ENCODE measurements at regions of chr19 and their contacts with region 1.

Region 1: DNA sequence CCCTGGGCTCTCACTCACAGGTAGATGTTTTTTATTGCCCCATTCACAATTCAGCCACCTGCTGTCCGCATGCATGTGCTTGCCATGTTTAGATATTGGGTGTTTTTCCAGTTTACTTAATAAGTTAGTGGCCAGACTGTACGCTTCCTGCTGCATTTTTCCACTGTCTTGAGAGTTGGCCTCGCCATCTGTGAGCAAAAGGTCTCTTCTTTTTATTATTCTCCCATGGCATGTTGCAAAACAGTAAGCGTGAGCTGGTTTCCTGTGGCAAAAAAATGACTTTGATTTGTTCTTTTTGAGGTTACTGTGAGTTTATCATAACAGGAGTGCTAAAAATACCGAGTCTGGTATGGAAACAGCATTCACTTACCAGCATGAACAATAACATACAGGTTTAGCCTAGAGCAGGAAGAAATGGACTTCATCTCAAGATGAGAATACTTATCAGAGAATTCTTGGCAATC is 46.0 kb downstream of the SAE1 start:
- DNase-seq: peak; percentile 65 to 79 (median 70)
- H3K4me3 ChIP-seq: peak overlapping the region in 1 of 2 donors; percentile 26
- H3K4me3 Mint-ChIP-seq: peak overlapping the region; percentile 67 to 92 (median 78)
- H3K27ac ChIP-seq: peak overlapping the region; percentile 39
- H3K27ac Mint-ChIP-seq: peak overlapping the region; percentile 88 to 96 (median 91)
- H3K4me1 ChIP-seq: peaks cover 55% of the 10 kb centered on the region
- H3K4me1 Mint-ChIP-seq: peaks cover 42 to 75% (median 54%) of the 10 kb centered on the region in 4 donors
- H3K27me3 ChIP-seq: no peaks in the 10 kb centered on the region
- H3K27me3 Mint-ChIP-seq: no peaks in the 10 kb centered on the region

Region 2: DNA sequence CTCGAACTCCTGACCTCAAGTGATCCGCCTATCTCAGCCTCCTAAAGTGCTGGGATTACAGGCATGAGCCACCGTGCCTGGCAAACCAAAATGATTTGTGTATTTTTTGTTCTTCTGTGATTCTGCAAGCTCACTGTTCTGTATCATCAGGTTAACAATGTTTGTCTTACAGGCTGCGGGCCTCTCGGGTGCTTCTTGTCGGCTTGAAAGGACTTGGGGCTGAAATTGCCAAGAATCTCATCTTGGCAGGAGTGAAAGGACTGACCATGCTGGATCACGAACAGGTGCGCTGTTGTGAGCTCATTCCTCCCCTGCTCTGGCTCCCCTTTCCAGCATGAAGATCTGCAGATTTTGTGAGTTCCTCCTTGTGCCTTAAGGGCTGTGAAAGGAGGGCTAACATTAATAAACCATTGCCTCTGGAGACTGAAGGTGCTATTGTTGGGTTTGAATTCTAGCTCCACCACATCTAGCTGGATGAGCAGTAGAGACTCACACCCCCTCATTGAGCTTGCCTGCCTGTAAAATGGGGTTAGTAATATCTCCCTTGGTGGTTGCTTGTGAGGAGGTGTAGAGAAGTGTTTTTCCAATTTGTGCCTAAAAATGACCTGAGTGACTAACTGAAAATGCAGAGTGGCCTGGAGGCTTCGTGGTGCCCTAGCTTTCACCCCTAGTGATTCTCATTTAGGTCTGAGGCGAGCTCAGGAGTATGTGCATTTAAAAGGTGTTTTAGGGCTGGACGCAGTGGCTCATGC is 33.2 kb before region 1 on chr19:
- CTCF ChIA-PET with region 1: interaction called, 11 read pairs
- POLR2A ChIA-PET with region 1: interaction called, 3 read pairs
- intact Hi-C with region 1: no loop called
- DNase-seq: no peak
- H3K4me3 ChIP-seq: no peak overlapping the region
- H3K4me3 Mint-ChIP-seq: no peak overlapping the region
- H3K27ac ChIP-seq: no peak overlapping the region
- H3K27ac Mint-ChIP-seq: peak overlapping the region; percentile 30 to 87 (median 41)
- H3K4me1 ChIP-seq: peaks cover 37% of the 10 kb centered on the region
- H3K4me1 Mint-ChIP-seq: peaks cover 34 to 68% (median 48%) of the 10 kb centered on the region in 4 donors
- H3K27me3 ChIP-seq: no peaks in the 10 kb centered on the region
- H3K27me3 Mint-ChIP-seq: no peaks in the 10 kb centered on the region

Region 3: GRCh38 chr19:47152224-47153017 is 24.2 kb before region 1 on chr19:
- CTCF ChIA-PET with region 1: interaction called, 48 read pairs
- POLR2A ChIA-PET with region 1: interaction called, 41 read pairs
- intact Hi-C with region 1: no loop called
- DNase-seq: no peak
- H3K4me3 ChIP-seq: no peak overlapping the region
- H3K4me3 Mint-ChIP-seq: no peak overlapping the region
- H3K27ac ChIP-seq: no peak overlapping the region
- H3K27ac Mint-ChIP-seq: no peak overlapping the region
- H3K4me1 ChIP-seq: peaks cover 47% of the 10 kb centered on the region
- H3K4me1 Mint-ChIP-seq: peaks cover 26 to 65% (median 43%) of the 10 kb centered on the region in 4 donors
- H3K27me3 ChIP-seq: no peaks in the 10 kb centered on the region
- H3K27me3 Mint-ChIP-seq: no peaks in the 10 kb centered on the region

Region 4: DNA sequence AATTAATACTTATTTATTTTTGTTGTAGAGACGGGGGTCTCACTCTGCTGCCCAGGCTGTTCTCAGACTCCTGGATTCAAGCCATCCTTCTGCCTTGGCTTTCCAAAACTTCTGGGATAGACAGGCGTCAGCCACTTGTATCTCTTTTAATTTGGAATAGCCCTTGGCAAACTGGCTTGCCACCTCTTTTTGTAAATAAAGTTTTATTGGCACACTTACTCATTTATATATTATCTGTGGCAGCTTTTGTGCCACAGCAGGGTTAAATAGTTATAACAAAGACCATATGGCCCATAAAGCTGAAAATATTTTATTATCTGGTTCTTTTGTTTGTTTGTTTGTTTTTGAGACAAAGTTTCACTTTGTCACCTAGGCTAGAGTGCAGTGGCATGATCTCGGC is 23.9 kb after region 1 on chr19:
- CTCF ChIA-PET with region 1: no interaction called
- POLR2A ChIA-PET with region 1: no interaction called
- intact Hi-C with region 1: no loop called
- DNase-seq: no peak
- H3K4me3 ChIP-seq: no peak overlapping the region
- H3K4me3 Mint-ChIP-seq: no peak overlapping the region
- H3K27ac ChIP-seq: no peak overlapping the region
- H3K27ac Mint-ChIP-seq: no peak overlapping the region
- H3K4me1 ChIP-seq: no peaks in the 10 kb centered on the region
- H3K4me1 Mint-ChIP-seq: peaks cover 0 to 14% (median 7%) of the 10 kb centered on the region in 4 donors
- H3K27me3 ChIP-seq: no peaks in the 10 kb centered on the region
- H3K27me3 Mint-ChIP-seq: no peaks in the 10 kb centered on the region